Right ventricle myocardium superior (tissue), 1 donor: ENCODE measurements at regions of chr13 and their contacts with region 1.

Region 1: DNA sequence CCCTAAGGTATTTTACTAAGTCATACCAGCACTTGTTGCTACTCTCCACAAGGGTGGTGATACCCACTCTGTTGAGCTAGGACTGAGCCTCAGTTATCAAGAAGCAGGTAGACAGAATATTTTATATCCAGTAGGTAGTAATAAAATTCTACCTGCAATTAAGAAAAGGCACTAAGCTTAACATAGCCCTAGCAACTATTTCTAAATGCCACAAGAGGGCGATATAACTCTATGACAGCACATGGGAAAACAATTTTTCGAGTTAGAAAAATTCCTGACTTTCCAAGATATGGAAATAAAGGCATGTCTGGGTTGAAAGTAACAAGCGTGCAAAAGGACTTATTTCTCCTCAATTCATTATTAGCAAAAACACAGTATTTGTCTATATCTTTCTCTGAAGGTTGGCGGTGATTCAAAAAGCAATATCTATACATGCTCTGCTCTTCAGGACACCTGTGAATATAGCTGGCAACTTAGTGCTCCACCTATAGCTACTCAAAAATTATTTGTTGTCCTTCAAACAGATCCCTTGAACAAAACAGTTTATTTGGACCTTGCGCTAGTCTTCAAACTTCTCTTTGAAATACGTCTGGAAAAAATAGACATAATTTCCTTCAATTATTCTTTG is 14.7 kb downstream of the CCDC169 start:
- DNase-seq: no peak
- ATAC-seq: peak; percentile 61

Region 2: GRCh38 chr13:35818633-35819067 is 464.3 kb before region 1 on chr13:
- intact Hi-C with region 1: no loop called
- DNase-seq: no peak
- ATAC-seq: peak; percentile 68

Region 3: GRCh38 chr13:36395280-36395679 is 112.3 kb after region 1 on chr13:
- intact Hi-C with region 1: loop called (anchors 5 kb)
- DNase-seq: no peak
- ATAC-seq: peak; percentile 74

Region 4: GRCh38 chr13:37429976-37430375 is 1147.0 kb after region 1 on chr13:
- intact Hi-C with region 1: no loop called
- DNase-seq: no peak
- ATAC-seq: no peak